Activated naive CD4-positive, alpha-beta T cell treated with anti-CD3 and anti-CD28 coated beads for 36 hours (primary cell): ENCODE measurements at regions of chr12 and their contacts with region 1.

Region 1: DNA sequence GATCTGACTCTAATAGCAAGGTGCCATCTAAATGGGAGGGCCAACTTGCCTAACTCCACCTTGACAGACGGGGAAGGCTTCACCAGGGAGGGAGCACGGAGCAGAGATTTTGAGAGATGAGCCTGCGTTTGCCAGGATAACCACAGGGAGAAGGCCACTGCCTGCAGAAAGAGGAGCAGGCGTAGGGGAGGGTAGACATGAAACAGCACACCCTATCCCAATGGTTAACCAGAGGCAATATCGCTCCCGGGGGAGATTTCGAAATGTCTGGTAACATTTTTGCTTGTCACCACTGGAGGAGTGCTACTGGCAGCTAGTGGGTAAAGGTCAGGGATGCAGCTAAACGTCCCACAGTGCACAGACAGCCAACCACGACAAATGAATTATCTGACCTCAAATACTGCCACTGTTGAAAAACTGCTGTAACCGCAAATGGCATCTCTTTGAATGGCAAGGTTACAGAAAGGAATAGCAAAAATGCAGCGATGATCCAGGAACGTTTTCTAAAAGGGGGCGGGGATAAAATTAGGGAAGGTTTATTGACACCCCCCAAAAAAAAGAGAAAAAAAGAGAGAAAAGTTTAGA is 126.0 kb upstream of the ATF7IP start:
- DNase-seq: peak; percentile 60
- H3K4me3 Mint-ChIP-seq: peak overlapping the region; percentile 68
- H3K27ac Mint-ChIP-seq: peak overlapping the region; percentile 79
- H3K4me1 Mint-ChIP-seq: peaks cover 20% of the 10 kb centered on the region
- H3K27me3 Mint-ChIP-seq: no peaks in the 10 kb centered on the region

Region 2: GRCh38 chr12:14185427-14186192 is 53.8 kb before region 1 on chr12:
- CTCF ChIA-PET with region 1: interaction called, 10 read pairs
- intact Hi-C with region 1: loop called (anchors 1 kb)
- DNase-seq: peak; percentile 47
- H3K4me3 Mint-ChIP-seq: no peak overlapping the region
- H3K27ac Mint-ChIP-seq: no peak overlapping the region
- H3K4me1 Mint-ChIP-seq: peaks cover 2% of the 10 kb centered on the region
- H3K27me3 Mint-ChIP-seq: peaks cover 5% of the 10 kb centered on the region

Region 3: DNA sequence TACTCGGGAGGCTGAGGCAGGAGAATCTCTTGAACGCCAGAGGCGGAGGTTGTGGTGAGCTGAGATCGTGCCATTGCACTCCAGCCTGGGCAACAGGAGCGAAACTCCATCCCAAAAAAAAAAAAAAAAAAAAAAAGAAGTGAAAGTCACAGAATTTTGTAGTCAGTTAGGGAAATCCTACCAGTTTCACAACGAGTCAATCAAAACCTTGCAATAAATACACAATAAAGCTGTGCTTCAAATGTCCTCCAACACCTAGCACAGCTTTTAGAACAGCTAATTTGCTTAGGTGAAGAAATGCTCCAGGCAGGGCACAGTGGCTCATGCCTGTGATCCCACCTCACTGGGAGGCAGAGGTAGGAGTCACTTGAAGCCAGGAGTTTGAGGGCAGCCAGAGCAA is 13.3 kb after region 1 on chr12:
- CTCF ChIA-PET with region 1: interaction called, 19 read pairs
- intact Hi-C with region 1: loop called (anchors 1 kb)
- DNase-seq: no peak
- H3K4me3 Mint-ChIP-seq: no peak overlapping the region
- H3K27ac Mint-ChIP-seq: no peak overlapping the region
- H3K4me1 Mint-ChIP-seq: peaks cover 45% of the 10 kb centered on the region
- H3K27me3 Mint-ChIP-seq: no peaks in the 10 kb centered on the region

Region 4: GRCh38 chr12:14417715-14418114 is 178.3 kb after region 1 on chr12:
- CTCF ChIA-PET with region 1: interaction called, 9 read pairs
- intact Hi-C with region 1: loop called (anchors 1 kb)
- DNase-seq: peak; percentile 89
- H3K4me3 Mint-ChIP-seq: peak overlapping the region; percentile 70
- H3K27ac Mint-ChIP-seq: peak overlapping the region; percentile 90
- H3K4me1 Mint-ChIP-seq: peaks cover 59% of the 10 kb centered on the region
- H3K27me3 Mint-ChIP-seq: no peaks in the 10 kb centered on the region

Region 5: DNA sequence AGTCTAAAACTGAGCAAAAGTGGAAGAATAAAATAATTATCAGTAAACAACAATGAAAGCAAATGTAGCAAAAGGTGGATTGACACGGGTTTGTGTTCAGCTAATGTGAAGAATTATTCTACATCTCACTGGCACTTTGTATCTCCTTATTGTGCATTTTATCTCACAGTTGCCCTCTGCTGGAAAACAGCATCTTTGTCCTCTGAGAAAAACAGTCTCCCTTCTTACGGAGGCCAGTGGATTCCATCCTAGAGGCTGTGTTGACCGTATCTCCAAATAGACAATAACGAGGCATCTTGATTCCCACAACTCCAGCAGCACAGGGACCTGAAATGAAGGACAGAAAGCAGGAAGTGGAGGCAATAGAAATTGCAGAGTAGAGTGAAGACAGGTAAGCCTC is 379.5 kb after region 1 on chr12:
- CTCF ChIA-PET with region 1: interaction called, 26 read pairs
- intact Hi-C with region 1: loop called (anchors 1 kb)
- DNase-seq: peak; percentile 25
- H3K4me3 Mint-ChIP-seq: no peak overlapping the region
- H3K27ac Mint-ChIP-seq: no peak overlapping the region
- H3K4me1 Mint-ChIP-seq: peaks cover 2% of the 10 kb centered on the region
- H3K27me3 Mint-ChIP-seq: peaks cover 8% of the 10 kb centered on the region

Region 6: GRCh38 chr12:14716848-14717444 is 477.5 kb after region 1 on chr12:
- CTCF ChIA-PET with region 1: interaction called, 6 read pairs
- intact Hi-C with region 1: loop called (anchors 1 kb)
- DNase-seq: peak; percentile 68
- H3K4me3 Mint-ChIP-seq: no peak overlapping the region
- H3K27ac Mint-ChIP-seq: no peak overlapping the region
- H3K4me1 Mint-ChIP-seq: no peaks in the 10 kb centered on the region
- H3K27me3 Mint-ChIP-seq: no peaks in the 10 kb centered on the region

Region 7: GRCh38 chr12:15939111-15939510 is 1699.7 kb after region 1 on chr12:
- CTCF ChIA-PET with region 1: no interaction called
- intact Hi-C with region 1: no loop called
- DNase-seq: no peak
- H3K4me3 Mint-ChIP-seq: no peak overlapping the region
- H3K27ac Mint-ChIP-seq: no peak overlapping the region
- H3K4me1 Mint-ChIP-seq: no peaks in the 10 kb centered on the region
- H3K27me3 Mint-ChIP-seq: no peaks in the 10 kb centered on the region